Posterior vena cava (tissue), 2 donors: ENCODE measurements at regions of chr7 and their contacts with region 1.

Region 1: GRCh38 chr7:156473476-156474240 is 166.9 kb upstream of the RNF32 start:
- DNase-seq: peak; percentile 28

Region 2: GRCh38 chr7:155804897-155805825 is 668.5 kb before region 1 on chr7:
- intact Hi-C with region 1: loop called (anchors 10 kb)
- DNase-seq: peak; percentile 84

Region 3: GRCh38 chr7:155815332-155816191 is 658.1 kb before region 1 on chr7:
- intact Hi-C with region 1: loop called in 1 of 2 experiments (anchors 10 kb)
- DNase-seq: no peak

Region 4: DNA sequence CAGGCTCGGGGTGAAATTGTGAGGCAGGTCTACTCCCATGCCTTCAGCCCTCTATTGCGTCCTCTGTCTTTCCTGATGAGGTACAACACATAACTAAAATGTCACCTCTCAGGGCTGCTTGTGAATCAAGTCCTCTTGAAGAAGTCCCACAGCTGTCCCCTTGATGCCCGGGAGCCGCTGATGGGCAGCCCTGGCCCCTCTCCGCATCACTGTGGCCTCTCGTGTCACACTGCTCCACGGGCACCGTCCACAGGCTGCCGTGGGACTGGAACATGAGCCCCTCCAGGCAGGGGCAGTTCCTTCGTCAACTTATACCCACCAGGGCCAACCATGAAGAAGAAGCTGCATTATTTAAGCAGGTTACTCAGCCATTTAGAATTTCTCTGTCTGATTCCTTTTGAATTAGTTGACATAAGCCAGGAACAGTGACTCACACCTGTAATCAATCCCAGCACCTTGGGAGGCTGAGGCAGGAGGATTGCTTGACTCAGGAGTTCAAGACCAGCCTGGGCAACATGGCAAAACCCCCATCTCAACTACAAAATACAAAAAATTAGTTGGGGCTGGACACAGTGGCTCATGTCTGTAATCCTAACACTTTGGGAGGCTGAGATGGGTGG is 606.6 kb after region 1 on chr7:
- intact Hi-C with region 1: no loop called
- DNase-seq: peak; percentile 36